ENCODE measurements at regions of chr11 and their contacts with region 1.

Region 1: DNA sequence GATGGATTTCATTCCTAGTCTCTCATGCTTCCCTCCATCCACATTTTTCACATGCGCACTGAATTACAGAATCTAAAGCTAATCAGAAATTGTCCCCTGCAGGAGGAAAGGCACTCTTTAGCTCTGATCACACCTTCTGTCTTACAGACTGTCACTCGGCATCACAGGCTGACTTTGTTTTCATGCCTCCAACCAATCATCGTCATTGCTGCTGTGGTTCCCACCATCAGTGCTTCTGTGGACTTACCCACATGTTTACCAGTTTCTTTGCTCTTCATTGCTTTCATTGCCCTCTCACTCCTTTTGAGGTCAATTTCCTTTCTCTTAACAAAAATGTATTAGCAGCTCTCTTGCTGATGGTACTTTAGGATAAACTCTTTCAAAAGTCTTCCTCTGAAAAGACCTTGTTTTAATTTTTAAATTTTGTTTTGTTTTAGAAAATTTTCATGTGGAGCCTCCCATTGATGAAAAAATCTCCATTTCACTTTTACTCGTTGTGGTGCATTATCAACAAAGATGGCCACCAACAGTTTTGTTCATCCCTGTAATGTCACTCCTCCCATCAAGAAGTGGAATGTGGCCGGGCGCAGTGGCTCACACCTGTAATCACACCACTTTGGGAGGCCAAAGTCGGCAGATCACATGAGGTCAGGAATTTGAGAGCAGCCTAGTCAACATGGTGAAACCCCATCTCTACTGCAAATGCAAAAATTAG is 20.2 kb upstream of the TREH start:
- DNase-seq: peak; percentile 82 to 89 (median 86)
- H3K4me3 ChIP-seq: no peak overlapping the region
- H3K4me3 Mint-ChIP-seq: peak overlapping the region in 7 of 8 donors; percentile 51 to 86 (median 73)
- H3K27ac ChIP-seq: peak overlapping the region; percentile 40
- H3K27ac Mint-ChIP-seq: peak overlapping the region; percentile 83 to 99 (median 98)
- H3K4me1 ChIP-seq: peaks cover 83% of the 10 kb centered on the region
- H3K4me1 Mint-ChIP-seq: peaks cover 33 to 73% (median 49%) of the 10 kb centered on the region in 4 donors
- H3K27me3 ChIP-seq: no peaks in the 10 kb centered on the region
- H3K27me3 Mint-ChIP-seq: no peaks in the 10 kb centered on the region

Region 2: DNA sequence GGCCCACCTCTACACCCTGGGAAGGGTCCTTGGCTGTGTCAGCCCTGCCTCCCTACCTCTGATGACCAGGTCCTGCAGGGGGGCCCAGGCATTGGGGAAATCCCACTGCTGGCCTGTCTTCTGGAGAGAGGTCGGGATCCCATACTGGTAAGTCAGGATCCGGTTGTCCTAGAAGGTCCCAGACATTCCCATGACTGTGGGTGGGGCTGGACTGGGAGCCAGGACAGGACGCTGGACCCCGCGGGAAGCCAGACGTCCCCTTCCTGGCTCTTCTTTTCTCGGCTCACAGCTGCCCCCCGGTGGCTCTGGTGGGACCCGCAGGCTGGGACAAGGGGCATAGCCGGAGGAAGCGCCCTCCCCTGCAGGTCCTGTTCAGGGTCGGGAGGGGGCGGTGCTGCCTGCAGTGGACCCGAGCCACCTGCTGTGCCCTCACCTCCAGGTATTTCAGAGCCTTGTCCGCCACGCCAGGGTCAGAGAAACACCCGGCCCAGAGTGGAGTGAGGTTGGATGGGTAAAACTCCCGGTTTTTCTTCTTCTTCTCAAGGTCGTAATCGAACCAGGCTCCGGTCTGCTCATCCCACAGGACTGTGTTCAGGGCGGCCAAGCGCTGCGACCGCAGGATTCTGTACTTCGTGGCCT is 40.2 kb before region 1 on chr11:
- CTCF ChIA-PET with region 1: no interaction called
- POLR2A ChIA-PET with region 1: no interaction called
- intact Hi-C with region 1: no loop called
- DNase-seq: peak; percentile 80 to 87 (median 80)
- H3K4me3 ChIP-seq: no peak overlapping the region
- H3K4me3 Mint-ChIP-seq: peak overlapping the region in 1 of 8 donors; percentile 34
- H3K27ac ChIP-seq: no peak overlapping the region
- H3K27ac Mint-ChIP-seq: no peak overlapping the region
- H3K4me1 ChIP-seq: peaks cover 11% of the 10 kb centered on the region
- H3K4me1 Mint-ChIP-seq: peaks cover 0 to 5% (median 2%) of the 10 kb centered on the region in 4 donors
- H3K27me3 ChIP-seq: no peaks in the 10 kb centered on the region
- H3K27me3 Mint-ChIP-seq: no peaks in the 10 kb centered on the region

Region 3: DNA sequence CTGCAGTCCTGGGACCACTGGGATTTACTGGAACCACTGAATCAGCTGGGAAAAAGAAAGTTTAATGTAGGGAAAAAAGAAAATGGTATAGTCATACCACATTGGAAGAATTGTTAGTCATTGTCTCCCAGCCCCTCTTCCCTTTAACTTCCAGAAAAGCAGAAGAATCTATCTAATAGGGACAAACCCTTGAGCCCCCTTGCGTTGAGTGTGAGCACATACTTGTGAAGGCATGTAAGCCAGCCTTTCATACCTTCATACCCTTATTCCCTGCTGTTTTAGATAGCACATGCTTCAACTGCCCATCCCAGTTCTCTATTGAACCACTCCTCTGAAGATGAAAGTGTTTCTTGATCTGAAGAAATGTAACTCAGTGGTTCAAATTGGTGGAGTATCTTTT is 26.8 kb before region 1 on chr11:
- CTCF ChIA-PET with region 1: no interaction called
- POLR2A ChIA-PET with region 1: no interaction called
- intact Hi-C with region 1: no loop called
- DNase-seq: no peak
- H3K4me3 ChIP-seq: no peak overlapping the region
- H3K4me3 Mint-ChIP-seq: no peak overlapping the region
- H3K27ac ChIP-seq: no peak overlapping the region
- H3K27ac Mint-ChIP-seq: no peak overlapping the region
- H3K4me1 ChIP-seq: no peaks in the 10 kb centered on the region
- H3K4me1 Mint-ChIP-seq: no peaks in the 10 kb centered on the region
- H3K27me3 ChIP-seq: no peaks in the 10 kb centered on the region
- H3K27me3 Mint-ChIP-seq: peaks cover 4 to 6% of the 10 kb centered on the region in 2 donors

Region 4: DNA sequence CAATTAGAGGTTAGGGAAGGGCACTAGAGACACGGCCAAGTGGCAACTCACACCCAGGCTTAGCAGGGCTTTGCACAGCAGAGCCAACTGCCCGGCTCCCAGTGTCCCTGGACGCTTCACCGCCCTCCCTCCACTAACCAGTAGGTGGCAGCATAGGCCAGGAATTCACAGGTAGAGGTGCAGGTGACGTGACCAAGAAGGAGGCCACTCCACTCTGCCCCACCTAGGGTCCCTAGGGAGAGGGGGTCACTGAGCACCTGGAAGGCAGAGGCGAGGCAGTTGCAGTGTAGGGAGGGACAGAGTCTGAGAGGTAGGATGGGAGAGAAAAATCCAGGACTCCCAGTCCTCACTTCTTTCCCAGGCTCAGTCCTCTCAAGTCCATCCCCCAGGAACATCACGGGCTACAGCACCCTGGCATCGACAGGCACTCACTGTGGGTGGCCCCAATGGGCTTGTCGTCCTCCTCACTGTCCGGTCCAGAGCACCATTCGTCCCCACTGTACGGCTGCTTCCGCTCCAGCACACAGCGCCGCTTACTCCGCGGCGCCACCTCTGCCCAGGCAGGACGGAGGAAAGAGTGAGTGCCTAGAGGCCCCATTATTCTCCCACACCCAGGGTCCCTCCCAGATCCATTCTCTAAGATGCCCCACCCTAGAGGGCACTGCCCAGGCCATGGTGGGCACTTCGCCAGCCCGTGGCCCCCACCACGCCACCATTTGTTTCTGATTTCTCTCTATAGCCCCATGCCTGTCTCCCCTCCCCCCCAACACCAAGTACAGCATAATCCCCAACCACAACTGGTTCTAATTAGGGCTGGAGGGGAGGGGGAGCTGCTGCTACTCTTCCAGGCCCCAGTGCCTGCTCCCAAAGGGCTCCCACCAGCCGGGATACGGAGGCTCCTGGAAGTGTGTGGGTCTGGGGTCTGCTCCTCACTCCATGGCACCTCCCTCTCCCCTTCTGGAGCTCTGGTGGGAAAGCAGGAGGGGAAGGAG is 207.7 kb after region 1 on chr11:
- CTCF ChIA-PET with region 1: no interaction called
- POLR2A ChIA-PET with region 1: interaction called, 20 read pairs
- intact Hi-C with region 1: no loop called
- DNase-seq: peak; percentile 80 to 86 (median 83)
- H3K4me3 ChIP-seq: no peak overlapping the region
- H3K4me3 Mint-ChIP-seq: peak overlapping the region in 6 of 8 donors; percentile 0 to 85 (median 54)
- H3K27ac ChIP-seq: peak overlapping the region; percentile 40
- H3K27ac Mint-ChIP-seq: peak overlapping the region; percentile 91 to 96 (median 95)
- H3K4me1 ChIP-seq: peaks cover 55% of the 10 kb centered on the region
- H3K4me1 Mint-ChIP-seq: peaks cover 32 to 51% (median 42%) of the 10 kb centered on the region in 4 donors
- H3K27me3 ChIP-seq: no peaks in the 10 kb centered on the region
- H3K27me3 Mint-ChIP-seq: no peaks in the 10 kb centered on the region